ENCODE measurements at regions of chr9 and their contacts with region 1.

Region 1: DNA sequence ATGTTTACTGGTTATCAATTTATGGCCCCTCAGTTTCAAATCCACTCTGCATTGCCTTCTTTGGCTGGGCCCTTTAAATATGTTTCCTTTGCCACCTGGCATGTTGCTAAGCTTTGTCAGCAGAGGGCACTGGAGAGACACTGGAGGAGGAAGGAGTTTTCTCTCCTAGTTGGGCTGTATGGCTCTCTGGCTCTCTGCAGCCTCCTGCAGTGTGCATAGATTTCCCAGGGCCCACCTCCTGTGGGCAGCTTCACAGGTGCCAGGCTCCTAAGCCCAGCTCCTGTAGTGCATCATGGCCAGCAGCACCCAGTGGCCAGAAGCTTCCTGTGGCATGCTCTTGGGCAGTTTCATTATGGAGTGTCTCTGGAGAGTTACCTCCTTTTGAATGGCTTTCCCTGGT is 23.3 kb downstream of the CAVIN4 start:
- DNase-seq: peak; percentile 62
- H3K27ac ChIP-seq: no peak overlapping the region
- CTCF ChIP-seq: peak; percentile 85

Region 2: GRCh38 chr9:100856238-100856637 is 255.0 kb after region 1 on chr9:
- CTCF ChIA-PET with region 1: no interaction called
- POLR2A ChIA-PET with region 1: no interaction called
- DNase-seq: no peak
- H3K27ac ChIP-seq: no peak overlapping the region
- CTCF ChIP-seq: no peak

Region 3: DNA sequence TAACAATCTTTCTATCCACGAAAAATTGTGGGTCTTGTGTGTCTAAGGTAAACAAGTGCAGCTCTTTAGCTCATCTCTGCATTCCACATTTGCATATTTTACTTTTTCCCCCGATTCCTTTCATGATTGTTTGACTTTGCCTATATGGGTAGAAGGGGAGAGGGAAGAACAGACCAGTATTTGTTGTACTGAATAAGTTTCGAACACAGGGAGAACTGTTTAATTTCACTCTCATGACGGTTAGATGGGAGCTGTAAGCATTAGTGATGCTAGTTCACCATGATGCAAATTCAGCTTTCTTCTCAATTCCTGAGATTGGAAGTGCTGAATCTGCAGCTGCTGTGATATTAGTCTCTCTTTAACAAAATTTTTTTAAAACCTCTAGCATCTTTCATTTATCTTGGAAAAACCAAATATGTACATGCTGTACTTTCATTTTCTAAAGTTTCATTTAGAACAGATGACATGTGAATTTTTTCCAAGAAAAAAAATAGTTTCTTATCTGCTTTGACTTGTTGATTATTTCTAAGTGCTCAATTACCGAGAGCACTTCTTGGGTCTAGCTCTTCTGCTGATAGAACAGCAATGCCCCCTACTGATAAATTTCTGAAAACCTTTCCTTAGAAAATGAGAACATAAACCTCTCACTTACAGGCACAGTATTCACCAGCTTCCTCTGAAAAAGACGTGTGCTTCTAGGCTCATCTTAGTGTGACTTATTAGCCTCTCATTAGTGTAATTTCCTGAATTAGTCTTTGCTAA is 634.1 kb after region 1 on chr9:
- CTCF ChIA-PET with region 1: interaction called, 20 read pairs
- POLR2A ChIA-PET with region 1: no interaction called
- DNase-seq: peak; percentile 28
- H3K27ac ChIP-seq: no peak overlapping the region
- CTCF ChIP-seq: peak; percentile 62